ENCODE measurements at regions of chr7 and their contacts with region 1.

Region 1: DNA sequence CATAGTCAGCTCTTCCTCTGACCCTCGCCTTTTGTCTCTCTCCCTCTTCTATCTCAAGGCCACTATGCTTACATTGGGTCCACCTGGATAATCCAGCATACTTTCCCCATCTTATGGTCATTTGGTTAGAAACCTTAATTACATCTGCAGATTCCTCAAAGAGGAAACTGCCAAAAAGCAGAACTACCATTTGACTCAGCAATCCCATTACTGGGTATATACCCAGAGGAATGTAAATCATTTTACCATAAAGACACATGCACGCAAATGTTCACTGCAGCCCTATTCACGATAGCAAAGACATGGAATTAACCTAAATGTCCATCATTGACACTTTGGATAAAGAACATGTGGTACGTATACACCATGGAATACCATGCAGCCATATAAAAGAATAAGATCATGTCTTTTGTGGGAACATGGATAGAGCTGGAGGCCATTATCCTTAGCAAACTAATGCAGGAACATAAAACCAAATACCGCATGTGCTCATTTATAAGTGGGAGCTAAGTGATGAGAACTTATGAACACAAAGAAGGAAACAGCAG is 114.8 kb upstream of the NPY start:
- DNase-seq: no peak
- ATAC-seq: no peak

Region 2: DNA sequence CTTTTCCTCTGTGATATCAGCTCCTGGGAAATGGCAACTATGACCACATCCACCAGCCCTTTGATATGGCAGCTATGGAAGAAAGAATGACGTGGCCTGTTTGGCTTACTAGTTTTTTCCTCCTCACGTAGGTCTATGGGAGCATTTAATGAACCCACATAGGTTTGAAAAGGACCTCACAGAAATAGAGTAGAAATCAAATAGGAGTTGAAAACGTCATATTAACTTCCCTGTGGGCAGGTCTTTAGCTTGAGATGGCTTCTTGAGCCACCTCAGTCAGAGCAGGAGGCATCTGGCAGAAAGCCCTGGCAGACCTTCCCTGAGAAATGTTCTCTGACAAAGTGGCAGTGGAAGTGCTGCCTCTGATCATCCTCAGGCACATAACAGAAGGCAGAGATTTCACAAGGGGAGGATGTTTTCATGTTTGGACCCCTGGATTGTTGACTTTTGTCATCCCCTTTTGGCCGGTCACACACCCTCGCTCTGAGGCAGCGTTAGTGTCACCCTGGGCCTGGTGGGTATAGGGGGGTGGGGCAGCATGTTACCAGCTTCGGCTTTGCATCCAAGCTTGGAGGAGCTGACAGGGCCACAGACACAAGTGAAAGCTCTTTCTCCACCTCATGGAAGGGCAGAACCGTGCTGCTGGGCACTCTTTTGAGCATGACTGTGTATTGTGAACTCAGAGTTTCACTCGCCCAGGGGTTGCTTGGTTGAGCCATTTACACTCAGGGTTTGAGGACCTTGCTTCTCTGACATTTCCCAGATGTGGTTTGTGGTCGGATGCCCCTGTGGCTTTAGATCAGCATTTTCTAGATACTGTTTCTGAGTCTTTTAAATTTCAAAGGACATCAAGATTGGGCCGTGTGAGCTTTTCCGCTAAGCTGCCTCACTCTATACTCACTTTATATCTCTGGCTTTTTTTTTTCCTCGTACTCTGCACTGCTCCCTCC is 274.9 kb before region 1 on chr7:
- intact Hi-C with region 1: no loop called
- DNase-seq: no peak
- ATAC-seq: no peak

Region 3: DNA sequence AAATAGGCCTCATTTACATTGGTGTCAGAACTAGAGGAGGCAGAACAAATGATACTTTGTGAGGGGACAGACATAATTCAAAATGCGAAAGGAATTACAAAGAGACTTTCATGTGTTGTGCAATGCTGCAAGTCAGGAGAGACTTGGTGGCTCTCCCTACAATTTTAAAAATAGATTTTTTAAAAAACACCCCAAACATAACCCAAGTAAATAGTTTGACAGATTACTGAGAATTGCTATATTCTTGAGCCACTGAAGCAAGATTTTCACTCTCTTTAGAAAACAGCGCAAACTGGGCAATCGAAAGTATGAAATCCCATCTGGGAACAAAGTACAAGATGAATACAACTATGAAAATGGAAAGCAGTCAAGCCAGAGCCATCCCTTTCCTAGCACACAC is 11.5 kb before region 1 on chr7:
- intact Hi-C with region 1: loop called (anchors 1 kb)
- DNase-seq: no peak
- ATAC-seq: no peak